PC-3 (cell line): ENCODE measurements at regions of chrX and their contacts with region 1.

Region 1: GRCh38 chrX:72238721-72239475 is at the start of gene ERCC6L:
- DNase-seq: peak; percentile 92
- ATAC-seq: peak; percentile 89
- H3K4me3 ChIP-seq: peak within 1 kb of the TSS; percentile 95
- H3K27ac ChIP-seq: peak within 1 kb of the TSS; percentile 77
- H3K4me1 ChIP-seq: peaks cover 35% of the 10 kb centered on the region
- H3K27me3 ChIP-seq: no peaks in the 10 kb centered on the region
- CTCF ChIP-seq: no peak
- total RNA-seq, gene ERCC6L: 13.0 and 14.6 TPM in 2 replicates

Region 2: GRCh38 chrX:72181178-72182125 is 57.4 kb before region 1 on chrX and contains the start of gene PIN4:
- CTCF ChIA-PET with region 1: no interaction called
- POLR2A ChIA-PET with region 1: interaction called, 3 read pairs
- intact Hi-C with region 1: loop called (anchors 10 kb)
- DNase-seq: peak; percentile 97
- ATAC-seq: peak; percentile 96
- H3K4me3 ChIP-seq: peak within 1 kb of the TSS; percentile 78
- H3K27ac ChIP-seq: peak within 1 kb of the TSS; percentile 74
- H3K4me1 ChIP-seq: peaks cover 12% of the 10 kb centered on the region
- H3K27me3 ChIP-seq: no peaks in the 10 kb centered on the region
- CTCF ChIP-seq: no peak
- total RNA-seq, gene PIN4: 30.0 and 44.1 TPM in 2 replicates

Region 3: DNA sequence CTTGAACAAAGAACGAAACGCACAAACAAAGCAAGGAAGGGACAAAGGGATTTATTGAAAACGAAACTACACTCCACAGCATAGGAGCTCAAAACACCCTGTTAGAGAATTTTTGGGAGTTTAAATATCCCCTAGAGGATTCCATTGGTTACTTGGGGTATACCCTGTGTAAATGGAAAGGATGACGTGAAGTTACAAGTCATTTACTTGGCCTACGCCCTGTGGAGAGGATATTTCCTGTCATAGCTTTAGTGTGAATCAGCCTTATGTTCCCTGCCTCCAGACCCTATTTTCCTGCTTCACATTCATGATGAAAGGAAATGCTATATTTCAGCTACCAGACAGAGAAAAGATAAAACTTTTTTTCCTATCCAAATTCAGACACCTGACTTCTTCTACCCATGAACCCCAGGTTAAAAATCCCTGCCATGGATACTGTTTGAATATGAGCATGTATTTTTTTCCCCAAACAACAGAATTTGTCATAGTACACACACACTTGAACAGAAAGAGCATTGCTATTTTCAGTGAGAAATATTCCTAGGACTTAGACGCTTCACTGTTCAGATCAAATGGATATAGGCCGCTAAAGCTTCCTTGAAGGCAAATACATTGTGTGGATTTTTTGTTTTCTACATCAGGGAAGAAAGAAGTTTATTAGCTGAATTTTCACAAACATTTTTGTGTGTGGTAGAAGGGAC is 36.9 kb before region 1 on chrX:
- CTCF ChIA-PET with region 1: no interaction called
- POLR2A ChIA-PET with region 1: interaction called, 4 read pairs
- intact Hi-C with region 1: loop called (anchors 5 kb)
- DNase-seq: peak; percentile 77
- ATAC-seq: peak; percentile 97
- H3K4me3 ChIP-seq: peak overlapping the region; percentile 34; the same call in 1 of the 2 replicates
- H3K27ac ChIP-seq: peak overlapping the region; percentile 82
- H3K4me1 ChIP-seq: peaks cover 19% of the 10 kb centered on the region
- H3K27me3 ChIP-seq: no peaks in the 10 kb centered on the region
- CTCF ChIP-seq: no peak

Region 4: DNA sequence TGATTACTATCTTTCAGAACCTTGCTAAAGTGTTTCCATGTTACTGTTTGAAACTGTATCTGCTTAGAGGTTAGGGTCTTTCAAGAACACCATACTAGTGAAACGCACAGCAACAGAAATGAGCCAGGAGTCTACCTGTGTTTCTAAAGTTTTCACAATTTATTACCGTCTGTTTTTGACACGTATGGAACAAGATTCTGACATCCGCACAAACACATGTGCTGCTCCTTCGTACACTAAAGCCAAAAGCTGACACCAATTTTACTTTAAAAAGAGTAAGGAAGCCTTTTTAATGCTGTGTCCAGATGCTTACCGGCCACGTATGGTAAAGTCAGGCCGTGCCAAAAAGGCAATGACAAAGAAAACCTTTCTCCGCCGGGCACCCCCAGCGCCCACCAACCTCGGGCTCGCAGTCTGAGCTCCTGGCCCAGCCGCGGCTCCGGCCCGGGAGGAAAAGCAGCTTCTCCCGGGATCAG is 37.6 kb after region 1 on chrX:
- CTCF ChIA-PET with region 1: no interaction called
- POLR2A ChIA-PET with region 1: interaction called, 7 read pairs
- intact Hi-C with region 1: loop called (anchors 5 kb)
- DNase-seq: no peak
- ATAC-seq: no peak
- H3K4me3 ChIP-seq: peak overlapping the region; percentile 91
- H3K27ac ChIP-seq: peak overlapping the region; percentile 66
- H3K4me1 ChIP-seq: peaks cover 44% of the 10 kb centered on the region
- H3K27me3 ChIP-seq: no peaks in the 10 kb centered on the region
- CTCF ChIP-seq: no peak

Region 5: GRCh38 chrX:72297953-72298730 is 59.2 kb after region 1 on chrX:
- CTCF ChIA-PET with region 1: no interaction called
- POLR2A ChIA-PET with region 1: no interaction called
- intact Hi-C with region 1: no loop called
- DNase-seq: peak; percentile 29
- ATAC-seq: peak; percentile 35; the same call in 1 of the 2 replicates
- H3K4me3 ChIP-seq: no peak overlapping the region
- H3K27ac ChIP-seq: no peak overlapping the region
- H3K4me1 ChIP-seq: no peaks in the 10 kb centered on the region
- H3K27me3 ChIP-seq: no peaks in the 10 kb centered on the region
- CTCF ChIP-seq: peak; percentile 50

Region 6: DNA sequence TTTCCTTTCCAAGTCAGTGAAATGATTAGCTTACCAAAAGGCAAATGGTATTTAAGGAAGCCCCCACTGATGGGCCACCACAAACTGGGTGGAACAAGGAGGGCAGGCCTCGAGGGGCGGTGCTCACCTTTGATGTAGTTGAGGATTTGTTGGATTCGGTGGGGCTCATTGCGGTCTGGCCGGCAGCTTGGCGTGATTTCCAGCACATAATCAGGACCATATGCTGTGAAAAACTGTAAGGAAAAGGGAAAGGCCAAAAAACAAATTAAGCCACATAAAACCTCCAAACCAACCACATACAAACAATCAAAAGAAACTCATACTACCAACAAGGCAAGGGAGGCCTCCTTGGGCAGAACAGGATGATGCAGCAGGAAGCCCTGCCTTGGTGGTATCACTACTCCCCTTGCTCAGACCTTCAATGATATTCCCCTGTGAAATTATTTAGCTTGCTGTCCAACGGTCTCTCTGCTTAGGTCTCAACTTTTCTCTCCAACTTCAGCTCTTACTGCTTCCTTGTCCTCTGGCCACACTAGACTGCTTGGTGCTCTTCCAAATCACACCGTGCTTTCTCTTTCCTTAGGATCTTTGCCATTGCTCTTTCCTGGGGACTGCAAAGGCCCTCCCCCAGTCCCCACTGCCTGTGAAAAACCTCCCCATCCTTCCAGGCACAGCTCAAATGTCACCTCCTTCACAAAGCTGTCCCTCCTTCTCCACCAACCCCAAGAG is 112.9 kb after region 1 on chrX:
- CTCF ChIA-PET with region 1: no interaction called
- POLR2A ChIA-PET with region 1: no interaction called
- intact Hi-C with region 1: no loop called
- DNase-seq: no peak
- ATAC-seq: no peak
- H3K4me3 ChIP-seq: no peak overlapping the region
- H3K27ac ChIP-seq: no peak overlapping the region
- H3K4me1 ChIP-seq: no peaks in the 10 kb centered on the region
- H3K27me3 ChIP-seq: no peaks in the 10 kb centered on the region
- CTCF ChIP-seq: no peak

Region 7: GRCh38 chrX:72381439-72382201 is 142.7 kb after region 1 on chrX:
- CTCF ChIA-PET with region 1: no interaction called
- POLR2A ChIA-PET with region 1: no interaction called
- intact Hi-C with region 1: no loop called
- DNase-seq: no peak
- ATAC-seq: no peak; the same call in 1 of the 2 replicates
- H3K4me3 ChIP-seq: no peak overlapping the region
- H3K27ac ChIP-seq: no peak overlapping the region
- H3K4me1 ChIP-seq: no peaks in the 10 kb centered on the region
- H3K27me3 ChIP-seq: no peaks in the 10 kb centered on the region
- CTCF ChIP-seq: no peak